Activated CD4-positive, alpha-beta T cell treated with anti-CD3 and anti-CD28 coated beads for 36 hours (primary cell): ENCODE measurements at regions of chr20 and their contacts with region 1.

Region 1: DNA sequence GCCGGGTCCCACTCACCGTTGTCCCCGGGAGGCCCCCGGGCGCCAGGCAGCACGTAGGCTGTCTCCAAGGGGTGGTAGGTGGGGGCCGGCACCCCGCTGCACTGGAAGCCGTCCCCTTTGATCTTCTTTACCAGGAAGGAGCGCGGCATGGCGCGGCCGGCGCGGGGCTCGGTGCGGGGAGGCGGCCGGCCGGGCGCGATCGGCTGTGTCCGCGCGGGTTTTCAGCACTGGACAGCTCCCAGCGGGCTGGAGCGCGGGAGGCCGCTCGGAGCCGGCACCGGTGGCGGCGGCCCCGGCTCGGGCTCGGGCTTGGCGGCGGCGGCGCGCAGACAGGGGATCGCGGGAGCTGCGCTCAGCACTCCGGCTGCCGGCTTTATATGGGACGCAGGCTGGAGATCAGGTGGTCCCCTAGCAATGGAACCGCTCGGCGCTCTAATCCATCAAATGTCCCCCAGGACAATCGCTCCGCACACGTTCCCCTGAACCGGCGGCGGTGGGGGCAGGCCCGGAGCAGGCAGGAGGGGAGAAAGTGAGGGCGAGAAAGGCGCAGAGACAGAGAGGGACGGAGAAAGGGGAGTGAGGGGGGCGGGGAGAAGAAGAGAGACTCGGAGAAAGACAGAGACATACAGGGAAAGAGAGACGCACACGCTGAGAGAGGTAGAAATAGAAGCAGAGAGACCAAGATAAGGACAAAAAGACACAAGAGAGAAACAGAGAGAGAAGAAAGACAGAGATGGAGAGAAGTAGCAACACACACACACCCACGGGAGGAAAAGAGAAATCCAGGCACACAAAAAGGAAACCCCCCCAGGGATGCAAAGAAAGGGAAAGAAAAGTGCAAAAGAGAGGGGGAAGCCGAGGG is at the start of gene SCRT2:
- DNase-seq: peak; percentile 82
- ATAC-seq: peak; percentile 85
- H3K4me3 Mint-ChIP-seq: no peak within 1 kb of the TSS
- H3K27ac Mint-ChIP-seq: no peak within 1 kb of the TSS
- H3K4me1 Mint-ChIP-seq: peaks cover 4% of the 10 kb centered on the region
- H3K27me3 Mint-ChIP-seq: peaks cover 65% of the 10 kb centered on the region
- total RNA-seq, gene SCRT2: not detected

Region 2: DNA sequence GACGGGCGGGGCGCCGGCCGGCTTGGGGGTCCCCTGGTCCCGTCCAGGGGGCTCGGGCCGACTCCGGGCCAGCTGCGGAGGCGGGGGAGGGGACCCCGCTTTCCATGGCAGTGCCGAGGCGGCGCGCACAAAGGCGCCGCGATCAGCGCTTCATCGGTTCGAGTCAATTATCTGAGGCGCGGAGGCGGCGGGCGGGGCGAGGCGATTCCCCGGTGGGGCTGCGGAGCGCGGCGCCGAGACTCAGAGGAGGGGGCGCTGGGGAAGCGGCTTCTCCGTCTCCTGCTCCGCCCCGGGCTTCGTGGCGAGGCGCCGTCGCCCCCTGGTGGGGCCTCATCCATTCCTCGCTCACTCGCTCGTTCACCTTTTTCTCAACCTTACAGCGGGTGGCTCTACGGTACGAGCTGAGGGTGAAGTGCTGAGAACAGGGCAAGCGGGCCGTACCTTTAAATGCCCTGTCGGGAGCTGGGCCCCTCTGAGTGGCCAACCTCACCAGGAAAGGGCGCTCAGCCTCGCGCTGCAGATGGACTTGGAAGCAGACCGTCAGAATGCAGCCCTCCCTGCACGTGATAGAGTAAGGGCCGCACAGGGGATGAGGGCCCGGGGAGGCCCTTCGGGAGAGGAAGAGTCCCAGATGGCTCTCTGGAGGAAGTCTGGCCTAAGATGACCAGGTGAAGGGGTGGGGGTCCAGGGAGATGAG is 52.7 kb after region 1 on chr20:
- CTCF ChIA-PET with region 1: no interaction called
- POLR2A ChIA-PET with region 1: no interaction called
- intact Hi-C with region 1: loop called in 1 of 2 experiments (anchors 5 kb)
- DNase-seq: peak; percentile 80
- ATAC-seq: peak; percentile 91
- H3K4me3 Mint-ChIP-seq: no peak overlapping the region
- H3K27ac Mint-ChIP-seq: no peak overlapping the region
- H3K4me1 Mint-ChIP-seq: no peaks in the 10 kb centered on the region
- H3K27me3 Mint-ChIP-seq: peaks cover 34% of the 10 kb centered on the region